ENCODE measurements at regions of chr17 and their contacts with region 1.

Region 1: GRCh38 chr17:47004906-47005305 is 25.9 kb upstream of the RPRML start:
- DNase-seq: no peak

Region 2: DNA sequence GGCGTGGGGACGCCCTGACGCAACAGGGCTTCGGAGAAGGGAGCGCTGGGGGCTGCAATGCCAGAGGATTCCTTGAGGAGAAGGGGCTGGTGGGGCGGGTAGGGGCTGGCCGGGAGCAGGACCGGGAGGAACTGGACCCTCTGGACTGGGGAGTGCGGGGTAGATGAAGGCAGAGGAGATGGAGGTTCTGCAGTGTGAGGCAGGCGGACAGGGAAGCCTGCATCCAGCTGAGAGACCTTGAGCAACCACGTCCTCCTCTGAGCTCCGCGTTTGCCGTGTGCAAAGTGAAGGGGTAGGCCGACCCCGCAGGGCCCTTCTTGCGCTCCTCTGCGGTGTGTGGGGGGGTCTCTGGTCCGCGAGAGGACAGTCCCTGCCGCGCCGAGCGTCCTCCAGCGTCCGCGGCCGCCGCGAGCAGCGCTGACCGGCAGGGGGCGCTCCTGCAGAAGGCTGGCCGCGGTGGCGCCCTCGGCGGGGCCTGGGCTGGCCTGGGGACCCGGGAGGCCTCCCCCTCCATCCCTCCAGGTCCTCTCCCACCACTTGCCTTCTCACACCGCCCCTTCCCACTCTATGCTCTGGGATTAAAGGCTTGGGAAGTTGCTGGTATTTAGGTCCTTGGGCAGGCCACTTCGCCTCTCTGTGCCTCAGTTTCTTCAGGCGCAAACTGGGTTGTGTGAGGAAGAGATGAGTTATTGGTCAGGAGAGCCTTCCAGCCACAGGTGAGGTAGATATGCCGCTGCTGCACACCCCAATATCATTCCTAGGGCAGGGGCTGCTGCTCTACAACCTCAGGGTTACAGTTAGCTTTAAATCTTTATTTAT is 163.1 kb before region 1 on chr17:
- intact Hi-C with region 1: loop called (anchors 5 kb)
- DNase-seq: peak in 3 of 10 donors; percentile 30 to 89 (median 70)

Region 3: DNA sequence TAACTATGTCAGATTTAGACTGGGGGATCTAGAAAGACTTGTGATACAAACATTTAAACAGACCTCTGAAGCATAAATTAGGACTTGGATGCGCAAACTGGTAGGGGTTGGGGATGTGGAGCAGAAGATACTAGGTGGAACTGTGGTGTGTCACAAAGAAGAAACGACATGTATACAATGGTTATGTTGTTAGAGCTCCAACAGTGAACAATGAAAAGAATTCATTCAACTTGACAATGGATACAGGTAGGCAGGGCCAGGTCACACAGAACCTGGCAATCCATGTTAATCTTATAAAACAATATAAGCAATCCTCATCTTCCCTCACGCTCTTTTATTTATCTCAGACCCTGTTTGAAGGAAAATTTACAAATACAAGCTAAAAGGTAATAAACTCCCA is 82.2 kb after region 1 on chr17:
- intact Hi-C with region 1: no loop called
- DNase-seq: no peak